Activated CD4-positive, alpha-beta memory T cell treated with anti-CD3 and anti-CD28 coated beads for 36 hours (primary cell): ENCODE measurements at regions of chr17 and their contacts with region 1.

Region 1: GRCh38 chr17:73210002-73210678 is 17.3 kb downstream of the COG1 start:
- DNase-seq: no peak
- H3K4me3 Mint-ChIP-seq: no peak overlapping the region
- H3K27ac Mint-ChIP-seq: peak overlapping the region; percentile 42
- H3K4me1 Mint-ChIP-seq: peaks cover 27% of the 10 kb centered on the region
- H3K27me3 Mint-ChIP-seq: no peaks in the 10 kb centered on the region

Region 2: GRCh38 chr17:73226556-73227172 is 16.5 kb after region 1 on chr17:
- CTCF ChIA-PET with region 1: interaction called, 3 read pairs
- POLR2A ChIA-PET with region 1: interaction called, 5 read pairs
- intact Hi-C with region 1: loop called (anchors 2 kb)
- DNase-seq: no peak
- H3K4me3 Mint-ChIP-seq: no peak overlapping the region
- H3K27ac Mint-ChIP-seq: peak overlapping the region; percentile 49
- H3K4me1 Mint-ChIP-seq: peaks cover 63% of the 10 kb centered on the region
- H3K27me3 Mint-ChIP-seq: no peaks in the 10 kb centered on the region

Region 3: DNA sequence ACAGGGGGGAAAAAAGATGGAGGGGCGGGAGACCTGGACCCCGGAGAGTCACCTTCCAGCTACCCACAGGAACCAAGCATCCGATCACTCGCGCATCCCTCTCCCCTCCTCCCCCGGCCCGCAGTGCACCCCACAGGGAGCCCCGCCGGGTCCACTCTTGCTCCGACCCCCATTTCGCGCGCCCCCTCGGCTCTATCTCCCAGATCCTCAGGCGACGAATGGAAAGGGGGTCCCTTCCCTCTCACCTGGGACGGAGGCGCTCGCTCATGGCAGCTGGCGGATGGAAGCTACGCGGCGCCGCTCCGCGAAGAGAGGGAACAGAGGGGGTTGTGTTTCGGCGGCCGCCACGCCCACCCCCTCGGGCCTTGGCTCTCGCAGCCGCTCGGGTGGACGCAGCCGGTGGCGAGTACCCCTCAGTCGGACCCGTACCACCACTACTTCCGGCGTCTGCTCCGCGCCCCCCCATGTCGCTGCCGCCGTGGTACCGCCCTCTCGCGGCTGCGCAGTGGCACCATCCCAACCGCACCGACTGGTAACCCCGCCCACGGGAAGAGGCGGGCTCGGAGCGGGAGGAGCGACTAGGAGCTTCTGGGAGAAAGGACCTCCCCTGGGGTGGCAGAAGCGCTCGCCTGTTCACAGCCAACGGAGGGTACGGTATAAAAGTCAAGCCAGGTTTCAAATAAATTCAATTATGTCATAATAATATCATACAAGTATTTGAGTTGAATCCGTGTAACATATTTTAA is 21.9 kb after region 1 on chr17:
- CTCF ChIA-PET with region 1: interaction called, 3 read pairs
- POLR2A ChIA-PET with region 1: interaction called, 5 read pairs
- intact Hi-C with region 1: loop called (anchors 1 kb)
- DNase-seq: peak; percentile 98
- H3K4me3 Mint-ChIP-seq: peak overlapping the region; percentile 94
- H3K27ac Mint-ChIP-seq: peak overlapping the region; percentile 94
- H3K4me1 Mint-ChIP-seq: peaks cover 50% of the 10 kb centered on the region
- H3K27me3 Mint-ChIP-seq: no peaks in the 10 kb centered on the region

Region 4: GRCh38 chr17:73278465-73279453 is 68.6 kb after region 1 on chr17:
- CTCF ChIA-PET with region 1: no interaction called
- POLR2A ChIA-PET with region 1: no interaction called
- intact Hi-C with region 1: no loop called
- DNase-seq: no peak
- H3K4me3 Mint-ChIP-seq: no peak overlapping the region
- H3K27ac Mint-ChIP-seq: no peak overlapping the region
- H3K4me1 Mint-ChIP-seq: no peaks in the 10 kb centered on the region
- H3K27me3 Mint-ChIP-seq: peaks cover 3% of the 10 kb centered on the region